Calu3 (cell line): ENCODE measurements at regions of chr9 and their contacts with region 1.

Region 1: GRCh38 chr9:129897263-129897662 is 62.0 kb downstream of the USP20 start:
- DNase-seq: no peak
- H3K4me3 Mint-ChIP-seq: no peak overlapping the region
- H3K27ac Mint-ChIP-seq: no peak overlapping the region
- H3K4me1 Mint-ChIP-seq: no peaks in the 10 kb centered on the region
- H3K27me3 Mint-ChIP-seq: no peaks in the 10 kb centered on the region
- CTCF ChIP-seq: no peak

Region 2: DNA sequence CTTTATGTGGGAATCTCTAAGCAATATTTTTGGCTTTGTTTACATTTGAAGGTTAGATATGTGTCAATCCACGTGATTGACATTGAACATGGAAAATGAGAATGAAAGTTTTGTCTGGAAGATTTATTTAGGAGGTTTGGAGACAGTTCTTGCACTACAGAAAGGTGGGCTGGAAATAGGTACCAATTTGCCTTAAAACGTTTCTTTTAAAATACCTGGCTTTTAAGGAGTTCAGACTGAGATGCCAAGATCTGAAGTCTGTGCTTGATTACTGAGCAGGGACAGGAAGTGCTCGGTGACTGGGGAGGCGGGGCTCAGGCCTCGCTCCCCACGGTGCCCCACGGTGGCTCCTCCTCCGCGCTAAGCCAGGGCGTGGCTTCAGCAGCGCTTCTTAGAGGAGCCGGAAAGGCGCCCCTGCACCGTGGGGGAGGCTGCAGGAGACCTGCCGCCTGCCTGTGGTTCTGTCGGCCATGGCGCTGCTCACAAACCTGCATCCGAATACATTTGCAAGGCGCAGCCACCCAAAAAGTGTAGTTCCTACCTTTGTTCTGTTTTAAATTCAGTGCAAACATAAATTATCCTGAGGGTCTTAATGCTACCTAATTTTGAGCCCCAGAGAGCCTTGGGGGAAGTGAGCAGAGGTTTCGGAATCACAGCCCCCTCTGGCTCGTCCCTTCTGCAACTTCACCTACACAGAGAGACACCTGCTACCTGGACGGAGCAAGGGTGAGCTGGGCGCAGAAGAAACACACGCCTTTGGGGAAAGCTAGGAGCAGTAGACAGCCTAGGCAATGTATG is 12.8 kb before region 1 on chr9:
- CTCF ChIA-PET with region 1: interaction called, 11 read pairs
- intact Hi-C with region 1: no loop called
- DNase-seq: peak; percentile 89
- H3K4me3 Mint-ChIP-seq: peak overlapping the region; percentile 66
- H3K27ac Mint-ChIP-seq: peak overlapping the region; percentile 44
- H3K4me1 Mint-ChIP-seq: peaks cover 12% of the 10 kb centered on the region
- H3K27me3 Mint-ChIP-seq: no peaks in the 10 kb centered on the region
- CTCF ChIP-seq: no peak